Aorta (tissue), 5 donors: ENCODE measurements at regions of chr2 and their contacts with region 1.

Region 1: GRCh38 chr2:176544991-176545956 is 276.0 kb downstream of the MTX2 start:
- DNase-seq: no peak
- ATAC-seq: no peak
- H3K4me3 ChIP-seq: no peak overlapping the region
- H3K27ac ChIP-seq: no peak overlapping the region
- H3K4me1 ChIP-seq: no peaks in the 10 kb centered on the region
- H3K27me3 ChIP-seq: no peaks in the 10 kb centered on the region

Region 2: DNA sequence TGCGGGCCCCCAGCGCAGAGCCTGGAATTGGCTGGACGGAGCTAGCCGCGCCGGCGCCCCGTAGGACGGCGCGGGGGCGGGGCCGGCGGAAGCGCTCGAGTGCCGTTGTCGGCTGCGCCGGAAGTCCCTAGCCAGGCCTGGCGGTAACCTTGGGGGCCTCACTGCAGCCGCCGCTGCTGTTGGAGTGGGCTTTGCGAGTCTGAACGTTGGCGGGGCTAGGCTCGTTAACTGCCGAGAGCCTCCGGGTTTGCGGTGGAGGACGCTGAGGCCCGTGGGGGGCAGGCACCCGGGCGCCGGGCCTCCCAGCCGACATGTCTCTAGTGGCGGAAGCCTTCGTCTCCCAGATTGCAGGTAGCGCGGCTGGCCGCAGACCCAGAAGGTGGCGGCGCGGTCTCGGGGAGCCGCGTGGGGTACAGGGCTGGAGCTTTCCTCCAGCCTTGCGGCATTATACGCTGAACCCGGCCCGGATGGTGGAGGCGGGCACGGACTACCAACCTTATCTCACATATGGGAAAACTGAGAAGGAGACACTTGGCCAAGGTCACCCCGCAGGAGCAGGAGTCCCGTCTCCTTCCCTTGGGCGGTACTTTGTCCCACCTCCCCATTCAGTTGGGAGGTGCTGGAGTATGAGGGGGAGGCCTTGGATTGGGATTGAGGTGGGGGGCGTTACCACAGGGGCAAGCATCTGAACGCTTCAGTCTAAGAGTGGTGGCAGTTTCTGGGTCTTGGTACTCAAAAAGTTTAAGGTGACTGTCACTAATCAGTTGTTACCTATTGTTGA is 275.8 kb before region 1 on chr2 and contains the start of gene MTX2:
- intact Hi-C with region 1: loop called (anchors 10 kb)
- DNase-seq: peak; percentile 77 to 90
- ATAC-seq: peak; percentile 97
- H3K4me3 ChIP-seq: peak within 1 kb of the TSS; percentile 44 to 88
- H3K27ac ChIP-seq: peak within 1 kb of the TSS in 1 of 2 donors; percentile 4
- H3K4me1 ChIP-seq: peaks cover 0 to 2% of the 10 kb centered on the region in 2 donors
- H3K27me3 ChIP-seq: peaks cover 0 to 2% of the 10 kb centered on the region in 2 donors
- total RNA-seq, gene MTX2: 18.0 to 18.5 TPM